Activated CD8-positive, alpha-beta T cell treated with anti-CD3 and anti-CD28 coated beads, Interleukin-2, amount 10 ng/mL, durations not matched to agents 7 days and 5 days (primary cell): ENCODE measurements at regions of chr17 and their contacts with region 1.

Region 1: DNA sequence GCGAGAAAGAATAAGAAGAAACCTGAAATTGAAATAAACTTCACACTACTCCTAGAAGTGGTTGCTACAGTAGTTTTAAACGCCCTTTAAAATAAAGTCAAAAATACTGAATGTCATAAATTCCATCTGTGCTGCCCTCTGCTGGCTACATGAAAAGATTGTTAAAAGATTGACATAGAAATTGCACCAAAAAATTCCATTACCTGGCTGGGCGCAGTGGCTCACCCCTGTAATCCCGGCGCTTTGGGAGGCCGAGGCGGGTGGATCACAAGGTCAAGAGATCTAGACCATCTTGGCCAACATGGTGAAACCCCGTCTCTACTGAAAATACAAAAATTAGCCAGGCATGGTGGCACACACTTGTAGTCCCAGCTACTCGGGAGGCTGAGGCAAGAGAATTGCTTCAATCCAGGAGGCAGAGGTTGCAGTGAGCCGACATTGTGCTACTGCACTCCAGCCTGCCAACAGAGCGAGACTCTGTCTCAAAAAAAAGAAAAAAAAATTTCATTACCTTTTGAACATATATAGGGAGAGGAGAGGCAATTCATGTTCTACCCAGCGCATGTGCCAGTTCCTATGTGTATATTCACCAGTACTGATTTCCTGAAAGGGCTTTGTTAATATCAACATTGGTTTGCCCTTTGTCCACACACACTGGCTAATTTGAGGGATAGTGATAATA is 36.5 kb downstream of the CYTH1 start:
- DNase-seq: peak; percentile 72
- ATAC-seq: no peak
- H3K4me3 Mint-ChIP-seq: peak overlapping the region; percentile 2
- H3K27ac Mint-ChIP-seq: peak overlapping the region; percentile 39
- H3K4me1 Mint-ChIP-seq: peaks cover 91% of the 10 kb centered on the region
- H3K27me3 Mint-ChIP-seq: no peaks in the 10 kb centered on the region

Region 2: DNA sequence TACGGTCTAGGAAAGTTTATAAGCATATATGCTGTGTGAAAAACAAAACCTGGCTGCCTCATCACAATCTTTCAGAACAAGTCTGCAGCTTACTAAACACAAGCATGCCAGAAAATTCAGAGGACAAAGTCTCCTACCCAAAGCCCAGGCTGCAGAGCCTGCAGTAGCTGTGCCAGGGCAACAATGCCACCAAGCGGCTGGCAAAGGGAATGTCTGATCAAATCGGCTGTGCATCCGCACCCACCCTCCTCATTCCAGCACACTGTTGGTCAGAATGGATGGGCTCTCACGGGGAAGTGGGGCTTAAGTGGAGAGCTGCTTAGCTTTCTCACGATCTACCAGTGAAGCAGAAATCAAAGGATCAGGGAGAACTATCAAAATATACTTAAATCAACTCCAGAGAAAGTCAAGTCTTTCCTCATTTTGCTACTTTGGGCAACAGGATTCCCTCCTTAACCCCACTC is 37.0 kb before region 1 on chr17:
- CTCF ChIA-PET with region 1: interaction called, 19 read pairs
- POLR2A ChIA-PET with region 1: interaction called, 4 read pairs
- DNase-seq: peak; percentile 70
- ATAC-seq: peak; percentile 81
- H3K4me3 Mint-ChIP-seq: peak overlapping the region; percentile 39
- H3K27ac Mint-ChIP-seq: peak overlapping the region; percentile 64
- H3K4me1 Mint-ChIP-seq: peaks cover 48% of the 10 kb centered on the region
- H3K27me3 Mint-ChIP-seq: no peaks in the 10 kb centered on the region

Region 3: DNA sequence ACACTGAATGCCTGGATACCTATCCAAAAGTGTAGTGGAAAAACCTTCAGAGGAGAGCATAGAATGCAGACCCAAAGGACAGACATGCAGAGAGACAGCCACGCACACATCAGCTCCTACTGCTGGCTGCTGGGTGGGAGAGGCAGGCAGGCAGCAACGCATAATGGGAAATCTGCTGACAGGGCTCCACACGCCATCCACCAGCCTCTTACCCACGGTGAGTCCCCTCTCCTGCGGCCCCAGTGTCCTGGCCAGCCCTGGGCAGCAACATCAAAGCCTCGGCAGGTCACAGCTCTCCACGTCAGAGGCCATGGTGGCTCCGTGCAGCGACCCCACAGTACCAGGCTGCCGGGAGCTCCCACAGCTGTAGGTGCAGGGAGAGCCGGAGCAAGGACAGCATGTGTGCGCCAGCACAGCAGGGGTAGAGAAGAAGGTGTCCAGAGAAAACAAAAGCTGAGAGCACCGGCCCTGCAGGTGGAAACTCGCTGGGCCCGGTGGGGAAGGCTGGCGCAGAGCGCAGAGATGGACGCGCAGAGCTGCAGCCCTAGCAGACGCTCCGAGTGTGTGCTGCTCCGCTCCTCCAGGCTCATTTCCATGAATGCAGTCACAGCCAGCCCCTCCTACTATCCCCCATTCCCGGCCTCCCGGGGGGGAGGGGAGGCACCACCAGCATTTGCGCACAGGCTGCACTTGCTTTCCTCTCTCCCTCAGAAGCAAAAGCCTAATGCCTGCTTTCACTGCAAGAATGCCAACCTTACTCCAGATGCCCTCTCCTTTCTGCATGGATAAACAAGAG is 22.3 kb before region 1 on chr17:
- CTCF ChIA-PET with region 1: interaction called, 9 read pairs
- POLR2A ChIA-PET with region 1: interaction called, 10 read pairs
- DNase-seq: no peak
- ATAC-seq: no peak
- H3K4me3 Mint-ChIP-seq: no peak overlapping the region
- H3K27ac Mint-ChIP-seq: peak overlapping the region; percentile 65
- H3K4me1 Mint-ChIP-seq: peaks cover 88% of the 10 kb centered on the region
- H3K27me3 Mint-ChIP-seq: no peaks in the 10 kb centered on the region

Region 4: GRCh38 chr17:78759203-78759968 is 13.8 kb after region 1 on chr17:
- CTCF ChIA-PET with region 1: interaction called, 17 read pairs
- POLR2A ChIA-PET with region 1: interaction called, 9 read pairs
- DNase-seq: peak; percentile 84
- ATAC-seq: peak; percentile 89
- H3K4me3 Mint-ChIP-seq: peak overlapping the region; percentile 59
- H3K27ac Mint-ChIP-seq: peak overlapping the region; percentile 87
- H3K4me1 Mint-ChIP-seq: peaks cover 71% of the 10 kb centered on the region
- H3K27me3 Mint-ChIP-seq: no peaks in the 10 kb centered on the region

Region 5: GRCh38 chr17:78769196-78769773 is 23.7 kb after region 1 on chr17:
- CTCF ChIA-PET with region 1: interaction called, 22 read pairs
- POLR2A ChIA-PET with region 1: interaction called, 22 read pairs
- DNase-seq: no peak
- ATAC-seq: peak; percentile 21
- H3K4me3 Mint-ChIP-seq: no peak overlapping the region
- H3K27ac Mint-ChIP-seq: no peak overlapping the region
- H3K4me1 Mint-ChIP-seq: peaks cover 39% of the 10 kb centered on the region
- H3K27me3 Mint-ChIP-seq: no peaks in the 10 kb centered on the region

Region 6: DNA sequence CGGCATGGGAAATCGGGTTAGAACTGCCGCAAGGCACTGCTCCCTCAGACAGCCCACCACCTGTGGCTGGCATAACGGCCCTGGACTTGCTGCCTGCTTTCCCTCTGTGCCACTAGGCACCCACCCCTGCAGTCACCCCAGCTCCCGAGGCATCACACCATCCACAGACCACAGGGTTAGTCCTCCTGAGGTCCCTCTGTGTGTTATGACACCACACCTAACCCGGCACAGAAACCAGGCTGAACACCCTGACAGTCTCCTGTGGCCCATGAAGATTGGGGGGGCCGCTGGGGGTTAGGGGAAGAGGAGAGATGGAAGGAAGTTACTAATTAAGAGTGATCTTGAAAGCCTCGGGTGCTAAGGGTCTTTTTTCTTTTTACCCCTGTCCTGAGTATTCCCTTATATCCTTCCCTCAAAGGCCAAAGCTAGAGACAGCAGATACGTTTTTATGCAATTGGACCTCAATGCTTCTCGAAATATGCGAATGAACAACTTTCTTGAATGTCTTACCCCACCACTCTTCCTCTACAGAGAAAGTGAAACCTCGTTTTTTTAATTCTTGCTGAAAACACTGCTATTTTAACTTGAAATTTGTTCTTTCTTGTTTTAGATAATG is 29.5 kb after region 1 on chr17:
- CTCF ChIA-PET with region 1: interaction called, 22 read pairs
- POLR2A ChIA-PET with region 1: interaction called, 39 read pairs
- DNase-seq: peak; percentile 84
- ATAC-seq: peak; percentile 72
- H3K4me3 Mint-ChIP-seq: peak overlapping the region; percentile 85
- H3K27ac Mint-ChIP-seq: peak overlapping the region; percentile 96
- H3K4me1 Mint-ChIP-seq: peaks cover 69% of the 10 kb centered on the region
- H3K27me3 Mint-ChIP-seq: no peaks in the 10 kb centered on the region

Region 7: DNA sequence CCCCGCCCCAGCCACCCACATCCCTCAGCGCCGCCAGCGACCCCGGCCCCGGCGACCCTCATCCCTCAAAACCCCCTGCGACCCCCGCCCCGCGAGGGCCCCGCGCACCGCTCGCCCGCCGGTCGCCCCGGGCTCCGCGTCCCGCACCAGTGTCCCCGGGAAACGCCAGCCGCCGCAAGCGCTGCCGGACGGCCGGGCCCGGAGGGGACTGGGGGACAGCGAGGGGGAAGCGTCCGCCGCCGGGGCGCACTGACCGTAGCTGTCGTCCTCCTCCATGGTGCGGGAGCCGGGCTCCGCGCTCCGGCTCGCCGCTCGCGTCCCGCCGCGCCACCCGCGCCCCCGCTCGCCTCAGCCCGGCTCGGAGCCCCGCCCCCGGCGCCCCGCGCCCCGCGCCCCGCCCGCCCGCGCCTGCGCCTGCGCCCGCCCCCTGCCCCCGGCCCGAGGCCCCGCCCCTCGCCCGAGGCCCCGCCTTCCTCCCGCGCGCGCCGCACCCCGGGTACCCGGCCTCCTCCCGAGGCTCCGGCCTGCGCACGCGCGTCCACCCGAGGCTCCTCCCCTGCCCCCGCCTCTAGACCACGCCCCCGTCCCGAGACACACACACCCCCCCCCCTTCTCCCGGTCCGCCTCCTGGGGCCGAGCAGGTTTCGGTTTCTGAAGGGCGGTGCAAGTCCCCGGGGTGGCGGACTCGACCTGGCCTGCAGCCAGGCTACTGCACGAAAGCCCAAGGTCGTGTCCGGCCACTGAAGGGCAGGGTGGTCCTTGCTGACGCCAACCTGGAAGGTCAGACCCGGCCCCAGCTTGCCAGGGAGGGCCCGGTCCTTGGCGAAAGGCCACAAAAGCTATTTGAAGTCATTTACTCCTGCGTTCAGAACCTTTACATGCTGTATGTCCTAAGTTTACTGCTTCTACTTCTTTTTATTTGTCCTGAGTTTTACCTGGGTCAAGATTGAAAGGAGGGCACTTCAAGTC is 36.7 kb after region 1 on chr17 and contains the start of gene CYTH1:
- CTCF ChIA-PET with region 1: interaction called, 13 read pairs
- POLR2A ChIA-PET with region 1: interaction called, 39 read pairs
- DNase-seq: peak; percentile 98
- ATAC-seq: peak; percentile 59
- H3K4me3 Mint-ChIP-seq: peak within 1 kb of the TSS; percentile 81
- H3K27ac Mint-ChIP-seq: peak within 1 kb of the TSS; percentile 95
- H3K4me1 Mint-ChIP-seq: peaks cover 54% of the 10 kb centered on the region
- H3K27me3 Mint-ChIP-seq: no peaks in the 10 kb centered on the region
- total RNA-seq, gene CYTH1: 137 to 138 TPM